ENCODE measurements at regions of chr4 and their contacts with region 1.

Region 1: DNA sequence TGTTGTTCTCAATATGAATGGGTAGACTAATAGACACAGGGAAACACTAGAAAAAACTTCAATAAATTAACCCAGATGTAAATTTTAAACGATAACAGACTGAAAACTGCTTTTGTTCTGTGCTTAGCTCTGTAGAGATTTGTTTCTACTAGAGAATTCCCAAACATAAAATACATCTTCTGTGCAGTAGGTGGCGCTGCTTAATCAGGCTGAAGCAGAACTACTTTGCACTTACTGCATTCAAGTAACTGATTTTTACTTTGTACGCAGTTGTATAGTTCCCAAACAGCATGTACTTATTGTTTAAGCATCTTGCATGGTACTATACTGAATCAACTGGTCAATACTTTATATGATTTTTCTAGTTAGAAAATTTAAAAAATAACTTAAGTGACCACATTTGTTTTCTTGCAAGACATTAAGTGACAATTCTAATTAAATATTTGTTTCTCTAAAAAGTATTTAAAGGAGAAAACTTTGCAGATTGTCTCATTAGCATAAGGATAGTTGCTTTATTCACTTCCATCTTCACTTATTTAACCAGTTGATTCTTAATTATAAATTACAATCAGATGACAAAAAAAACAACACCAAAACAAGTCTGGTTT is 490.6 kb downstream of the IL15 start:
- DNase-seq: peak; percentile 66
- H3K4me3 ChIP-seq: no peak overlapping the region
- H3K27ac ChIP-seq: no peak overlapping the region
- H3K4me1 ChIP-seq: peaks cover 0 to 44% (median 30%) of the 10 kb centered on the region in 4 donors
- H3K27me3 ChIP-seq: no peaks in the 10 kb centered on the region
- CTCF ChIP-seq: peak; percentile 31 to 83 (median 78)
- EP300 ChIP-seq: no peak
- POLR2A ChIP-seq: no peak

Region 2: GRCh38 chr4:141971869-141972268 is 155.1 kb before region 1 on chr4:
- intact Hi-C with region 1: no loop called
- DNase-seq: no peak
- H3K4me3 ChIP-seq: no peak overlapping the region
- H3K27ac ChIP-seq: no peak overlapping the region
- H3K4me1 ChIP-seq: no peaks in the 10 kb centered on the region
- H3K27me3 ChIP-seq: no peaks in the 10 kb centered on the region
- CTCF ChIP-seq: no peak
- EP300 ChIP-seq: no peak
- POLR2A ChIP-seq: no peak

Region 3: DNA sequence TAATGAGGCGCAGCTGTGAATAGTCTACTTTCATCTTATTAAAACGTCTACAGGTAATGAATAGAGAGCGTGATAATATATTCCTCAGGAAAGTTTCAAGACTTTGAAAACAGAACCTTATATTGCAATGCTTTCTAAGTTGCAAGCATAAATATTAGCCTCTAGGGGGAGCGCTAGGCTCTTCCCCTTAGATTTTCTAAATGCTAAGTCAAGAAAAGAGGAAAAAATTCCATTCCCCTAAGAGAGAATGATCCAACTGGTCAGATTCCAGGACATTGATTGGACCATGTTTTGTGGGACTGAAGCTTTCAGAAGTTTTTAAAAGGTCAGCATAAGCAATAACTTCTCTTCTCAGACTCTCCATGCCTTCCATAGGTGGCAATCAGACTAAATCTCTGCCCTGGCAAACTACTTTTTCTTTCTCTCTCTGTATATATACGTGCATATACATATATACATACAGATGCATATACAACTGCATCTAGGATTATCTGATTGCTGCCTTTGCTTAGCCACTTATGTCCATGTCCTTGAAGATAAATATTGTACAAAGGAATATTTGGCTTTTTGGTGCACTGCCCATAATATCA is 226.2 kb after region 1 on chr4:
- intact Hi-C with region 1: loop called (anchors 2 kb)
- DNase-seq: no peak
- H3K4me3 ChIP-seq: no peak overlapping the region
- H3K27ac ChIP-seq: peak overlapping the region in 2 of 4 donors; percentile 3 to 27
- H3K4me1 ChIP-seq: peaks cover 0 to 33% (median 18%) of the 10 kb centered on the region in 4 donors
- H3K27me3 ChIP-seq: no peaks in the 10 kb centered on the region
- CTCF ChIP-seq: peak; percentile 8 to 90 (median 65)
- EP300 ChIP-seq: no peak
- POLR2A ChIP-seq: no peak

Region 4: DNA sequence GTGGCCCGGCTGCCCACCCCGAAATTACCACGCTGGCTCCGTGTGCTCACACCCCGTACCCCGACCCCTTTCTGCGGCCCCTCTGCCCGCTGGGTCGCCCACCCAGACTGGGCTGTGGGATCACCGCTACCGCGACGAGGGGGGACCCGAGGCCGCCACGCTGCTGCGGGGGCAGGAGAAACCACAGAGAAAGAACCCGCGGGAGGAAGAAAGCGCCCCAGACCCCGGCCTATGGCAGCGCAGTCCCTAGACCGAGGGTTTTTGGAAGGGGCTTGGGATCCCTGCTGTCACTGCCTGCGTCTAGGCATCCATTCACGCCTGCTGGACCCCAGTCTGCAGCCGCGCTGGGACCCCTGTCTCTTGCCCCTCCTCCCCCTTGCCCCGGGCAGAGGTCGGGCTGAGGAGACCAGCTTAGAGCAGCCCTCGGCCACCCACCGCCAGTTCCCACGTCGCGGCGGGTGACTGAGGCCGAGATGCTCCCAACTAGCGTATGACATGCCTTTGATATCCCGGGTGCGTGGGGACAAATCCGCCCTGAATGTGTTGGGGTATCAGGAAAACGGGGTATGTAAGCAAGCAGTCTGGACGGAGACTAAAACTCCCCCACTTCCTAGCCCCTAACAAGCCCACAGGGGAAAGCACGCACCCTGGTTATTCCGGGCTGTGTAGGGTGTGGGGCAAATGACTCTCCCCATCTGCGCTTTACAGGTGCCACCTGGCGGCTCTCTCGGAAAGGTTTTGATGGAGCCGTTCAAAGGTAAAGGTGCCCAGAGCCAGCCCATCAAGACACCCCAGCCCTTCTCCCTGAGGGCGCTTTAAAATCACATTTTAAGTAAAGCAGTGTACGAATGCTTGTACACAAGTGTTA is 720.0 kb after region 1 on chr4:
- intact Hi-C with region 1: loop called (anchors 2 kb)
- DNase-seq: no peak
- H3K4me3 ChIP-seq: peak overlapping the region; percentile 67 to 80 (median 75)
- H3K27ac ChIP-seq: peak overlapping the region; percentile 72 to 82 (median 78)
- H3K4me1 ChIP-seq: peaks cover 0 to 29% (median 9%) of the 10 kb centered on the region in 4 donors
- H3K27me3 ChIP-seq: peaks cover 0 to 11% (median 0%) of the 10 kb centered on the region in 3 donors
- CTCF ChIP-seq: no peak
- EP300 ChIP-seq: no peak
- POLR2A ChIP-seq: no peak

Region 5: DNA sequence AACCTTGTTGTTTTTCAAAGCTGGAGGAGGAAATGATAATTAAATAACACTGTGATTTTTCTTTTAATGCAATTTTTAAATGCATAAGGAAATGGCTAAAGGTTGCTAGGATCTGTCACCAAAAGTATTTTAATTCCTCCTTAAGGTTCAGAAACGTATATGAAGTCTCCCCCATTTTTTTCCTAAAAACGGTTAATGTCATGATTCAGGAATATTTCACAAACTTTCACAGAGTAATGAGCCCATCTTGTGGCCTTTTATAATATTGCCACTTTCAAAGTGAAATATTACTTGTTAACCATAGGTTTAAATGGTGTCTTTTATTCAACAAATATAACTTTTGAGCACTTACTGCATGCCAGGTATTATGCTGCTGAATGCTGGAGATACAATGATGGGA is 958.2 kb after region 1 on chr4:
- intact Hi-C with region 1: loop called (anchors 10 kb)
- DNase-seq: no peak
- H3K4me3 ChIP-seq: no peak overlapping the region
- H3K27ac ChIP-seq: no peak overlapping the region
- H3K4me1 ChIP-seq: peaks cover 0 to 7% (median 0%) of the 10 kb centered on the region in 4 donors
- H3K27me3 ChIP-seq: no peaks in the 10 kb centered on the region
- CTCF ChIP-seq: peak in 2 of 4 experiments; percentile 18 to 31
- EP300 ChIP-seq: no peak
- POLR2A ChIP-seq: no peak

Measured in sigmoid colon (tissue), 7 donors.